Right ventricle myocardium superior (tissue), 1 donor: ENCODE measurements at regions of chr7 and their contacts with region 1.

Region 1: GRCh38 chr7:42940985-42941847 is 9.0 kb downstream of the MRPL32 start:
- DNase-seq: peak; percentile 85
- ATAC-seq: peak; percentile 79

Region 2: DNA sequence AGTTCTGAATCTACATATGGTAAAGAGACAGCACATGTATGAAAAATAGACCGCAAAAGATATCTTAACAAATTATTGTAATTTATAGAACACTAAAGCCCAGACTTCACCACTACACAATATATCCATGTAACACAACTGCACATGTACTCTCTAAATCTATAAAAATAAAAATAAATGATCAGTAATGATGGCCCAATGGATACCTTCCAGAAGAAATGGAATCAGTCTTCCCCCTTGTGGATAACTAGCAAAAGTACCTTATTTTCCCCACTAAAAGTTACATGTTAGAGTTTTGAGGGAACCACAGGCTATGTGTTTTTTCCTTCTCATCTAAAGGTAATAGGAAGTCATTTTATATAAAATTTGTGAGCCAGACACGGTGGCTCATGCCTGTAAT is 55.1 kb before region 1 on chr7:
- intact Hi-C with region 1: no loop called
- DNase-seq: no peak
- ATAC-seq: no peak

Region 3: DNA sequence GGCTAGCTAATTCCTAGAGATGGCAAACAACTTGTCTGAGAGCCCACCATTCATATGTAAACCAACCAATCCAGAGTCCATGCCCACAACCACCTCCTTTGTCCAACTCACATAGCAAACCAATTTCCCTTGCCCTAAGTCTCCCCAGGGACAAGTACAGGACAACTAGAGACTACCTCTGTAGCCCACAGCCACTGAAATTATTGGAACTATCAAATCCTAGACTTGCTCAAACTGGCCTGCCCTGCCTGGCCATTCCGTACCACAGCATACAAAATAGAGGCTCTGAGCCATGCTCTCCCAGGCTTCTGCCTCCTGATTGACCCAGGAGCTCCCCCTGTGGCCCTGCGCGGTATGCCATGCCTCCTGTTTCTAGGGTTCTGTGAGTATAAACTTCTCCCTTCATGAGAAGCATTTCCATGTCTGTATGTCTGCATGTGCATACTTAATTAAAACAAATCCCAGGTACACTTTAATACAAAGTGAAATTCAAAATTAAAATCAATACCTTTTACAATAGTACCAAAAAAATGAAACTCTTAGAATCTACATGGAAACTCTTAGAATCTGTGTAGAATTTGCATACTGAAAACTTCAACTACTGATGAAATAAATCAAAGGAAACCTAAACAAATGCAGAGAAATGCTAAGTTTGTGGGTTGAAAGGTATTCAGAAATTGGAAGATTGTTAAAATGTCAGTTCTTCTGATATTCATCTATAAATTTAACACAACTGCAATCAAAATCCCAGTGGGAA is 167.2 kb after region 1 on chr7:
- intact Hi-C with region 1: loop called (anchors 5 kb)
- DNase-seq: peak; percentile 80
- ATAC-seq: peak; percentile 71

Region 4: DNA sequence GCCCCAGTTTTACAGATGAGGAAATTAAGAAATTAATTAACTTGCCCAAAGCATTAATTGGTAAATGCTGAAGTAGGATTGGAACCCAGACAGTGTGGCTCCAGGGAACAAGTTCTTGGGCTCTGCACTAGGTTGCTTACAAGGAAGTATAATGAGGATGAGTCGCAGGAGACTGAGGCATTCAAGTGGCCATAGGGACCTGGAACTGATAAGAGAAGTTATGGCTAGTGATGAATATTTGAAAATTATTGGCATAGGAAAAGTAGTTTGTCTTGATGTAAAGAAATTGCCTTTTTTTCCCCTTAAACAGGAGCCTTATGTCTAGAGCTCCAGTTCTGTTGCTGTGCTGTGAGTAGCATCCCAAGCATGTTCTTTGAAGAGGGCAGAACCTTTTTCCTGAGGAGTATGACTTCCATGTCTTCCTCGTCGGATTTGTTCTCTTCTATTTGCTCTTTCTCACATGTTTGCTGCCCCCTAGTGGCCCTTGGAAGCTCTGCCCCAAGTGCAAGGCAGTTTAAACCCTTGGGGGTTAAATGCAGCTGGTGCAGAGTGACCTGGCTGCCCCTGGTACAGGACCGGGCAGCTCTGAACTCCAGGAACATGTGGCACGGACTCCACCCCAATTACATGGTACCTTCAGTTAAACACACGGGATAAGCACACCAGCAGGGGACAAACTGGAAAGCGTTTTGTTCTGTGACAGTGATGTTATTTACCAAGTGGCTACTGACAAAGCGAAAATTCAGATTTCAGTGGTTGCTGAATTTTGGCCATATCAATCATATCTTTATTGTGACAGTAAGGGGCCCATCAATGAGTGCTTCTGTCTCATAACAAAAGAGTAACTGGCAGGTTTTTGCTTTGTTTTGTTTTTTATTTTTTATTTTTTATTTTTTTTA is 320.0 kb after region 1 on chr7:
- intact Hi-C with region 1: loop called (anchors 2 kb)
- DNase-seq: peak; percentile 71
- ATAC-seq: peak; percentile 79